GM18951 (cell line): ENCODE measurements at regions of chr6 and their contacts with region 1.

Region 1: DNA sequence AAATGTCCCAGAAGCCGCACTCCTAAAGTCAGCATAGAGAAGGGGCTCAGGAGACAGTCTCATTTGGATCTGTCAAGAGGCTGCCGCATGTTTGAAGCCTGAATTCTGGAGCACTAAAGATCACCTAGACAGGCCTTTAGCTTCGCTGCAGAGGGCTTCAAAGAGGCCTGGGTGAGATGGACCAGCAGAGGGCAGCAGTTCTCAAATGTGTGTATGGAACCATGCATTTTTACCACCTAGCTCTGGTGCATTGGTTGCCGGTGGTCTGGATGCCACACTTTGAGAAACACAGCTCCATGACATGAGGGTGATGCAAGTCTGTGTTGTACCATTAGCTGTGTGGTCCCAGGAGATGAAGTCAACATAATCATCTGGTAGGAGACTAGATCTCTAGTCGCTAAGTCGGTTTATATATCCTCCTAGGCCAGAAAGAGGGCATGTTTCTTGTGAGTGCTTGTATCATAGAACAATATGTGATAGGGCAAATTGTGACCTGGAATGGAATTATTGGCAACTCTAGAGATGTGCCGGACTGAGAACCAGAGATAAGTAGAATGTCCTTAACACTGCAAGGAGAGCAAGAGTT is 64.8 kb downstream of the KIAA0319 start:
- POLR2A ChIP-seq: no peak

Region 2: DNA sequence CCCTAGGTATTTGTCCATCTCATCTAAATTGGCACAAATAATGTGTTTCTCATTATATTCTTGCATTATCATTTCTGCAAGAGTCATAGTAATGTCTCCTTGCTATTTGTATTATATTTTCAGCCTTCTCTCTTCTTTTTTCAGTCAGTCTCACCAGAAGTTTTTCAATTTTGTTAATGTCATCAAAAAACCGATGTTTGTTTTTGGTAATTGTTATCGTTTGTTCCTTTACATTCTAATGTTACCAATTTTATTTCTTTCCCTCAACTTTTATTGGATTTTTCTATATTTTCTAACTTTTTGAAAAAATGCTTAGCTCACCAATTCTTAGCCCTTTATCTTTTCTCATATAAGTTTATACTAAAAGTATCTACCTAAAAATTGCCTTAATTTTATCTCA is 537.3 kb before region 1 on chr6:
- in situ Hi-C with region 1: no loop called
- POLR2A ChIP-seq: no peak

Region 3: GRCh38 chr6:24766680-24767462 is 185.7 kb after region 1 on chr6:
- in situ Hi-C with region 1: loop called (anchors 10 kb)
- POLR2A ChIP-seq: no peak